ENCODE measurements at regions of chr6 and their contacts with region 1.

Region 1: GRCh38 chr6:16332175-16332542 is 93.8 kb downstream of the GMPR start:
- DNase-seq: peak; percentile 90
- H3K4me3 ChIP-seq: no peak overlapping the region
- H3K27ac ChIP-seq: peak overlapping the region in 2 of 4 donors; percentile 30 to 83
- H3K4me1 ChIP-seq: peaks cover 0 to 54% (median 47%) of the 10 kb centered on the region in 4 donors
- H3K27me3 ChIP-seq: no peaks in the 10 kb centered on the region
- CTCF ChIP-seq: peak; percentile 72 to 92 (median 84)
- EP300 ChIP-seq: no peak
- POLR2A ChIP-seq: no peak

Region 2: DNA sequence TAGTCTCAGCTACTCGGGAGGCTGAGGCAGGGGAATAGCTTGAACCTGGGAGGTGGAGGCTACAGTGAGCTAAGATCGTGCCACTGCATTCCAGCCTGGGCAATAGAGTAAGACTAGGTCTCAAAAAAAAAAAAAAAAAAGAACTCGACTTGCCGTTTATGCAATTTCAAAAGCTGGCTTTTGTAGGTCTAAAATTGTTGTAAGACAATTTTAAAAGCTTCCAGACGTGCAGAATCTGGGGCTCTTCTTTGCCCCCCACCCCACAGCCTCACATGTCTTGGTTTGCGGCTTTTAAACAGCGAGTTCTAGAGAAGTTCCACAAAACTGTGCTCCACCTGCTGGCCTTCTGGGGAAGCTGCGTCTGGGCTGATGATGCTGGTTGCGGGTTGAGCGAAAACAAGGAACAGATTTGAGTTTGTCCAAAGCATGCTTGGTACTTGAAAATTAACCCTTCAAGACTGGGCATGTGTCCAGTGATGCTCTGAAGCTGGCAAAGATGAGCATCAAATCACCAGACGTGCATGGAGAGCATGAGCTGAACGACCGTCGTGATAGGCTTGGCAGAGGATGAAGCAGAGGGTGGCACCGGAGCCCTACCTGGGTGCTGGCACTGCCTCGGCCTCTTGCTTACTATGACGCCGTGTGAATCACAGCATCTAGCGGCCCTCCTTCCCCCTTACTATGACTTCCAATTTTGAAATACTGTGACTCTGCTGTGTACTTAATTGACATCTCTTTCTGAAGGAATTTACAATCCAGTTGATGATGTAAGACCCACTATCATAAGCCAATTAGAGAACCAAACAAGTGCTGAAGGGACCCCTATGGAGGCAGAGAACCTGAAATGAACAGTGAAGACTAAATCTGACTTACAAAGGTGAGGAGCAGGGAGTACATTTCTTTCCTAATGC is 77.6 kb after region 1 on chr6:
- intact Hi-C with region 1: loop called (anchors 2 kb)
- DNase-seq: peak; percentile 74
- H3K4me3 ChIP-seq: no peak overlapping the region
- H3K27ac ChIP-seq: peak overlapping the region in 2 of 4 donors; percentile 1 to 5
- H3K4me1 ChIP-seq: peaks cover 0 to 53% (median 32%) of the 10 kb centered on the region in 4 donors
- H3K27me3 ChIP-seq: no peaks in the 10 kb centered on the region
- CTCF ChIP-seq: peak; percentile 52 to 88 (median 70)
- EP300 ChIP-seq: no peak
- POLR2A ChIP-seq: no peak

Region 3: DNA sequence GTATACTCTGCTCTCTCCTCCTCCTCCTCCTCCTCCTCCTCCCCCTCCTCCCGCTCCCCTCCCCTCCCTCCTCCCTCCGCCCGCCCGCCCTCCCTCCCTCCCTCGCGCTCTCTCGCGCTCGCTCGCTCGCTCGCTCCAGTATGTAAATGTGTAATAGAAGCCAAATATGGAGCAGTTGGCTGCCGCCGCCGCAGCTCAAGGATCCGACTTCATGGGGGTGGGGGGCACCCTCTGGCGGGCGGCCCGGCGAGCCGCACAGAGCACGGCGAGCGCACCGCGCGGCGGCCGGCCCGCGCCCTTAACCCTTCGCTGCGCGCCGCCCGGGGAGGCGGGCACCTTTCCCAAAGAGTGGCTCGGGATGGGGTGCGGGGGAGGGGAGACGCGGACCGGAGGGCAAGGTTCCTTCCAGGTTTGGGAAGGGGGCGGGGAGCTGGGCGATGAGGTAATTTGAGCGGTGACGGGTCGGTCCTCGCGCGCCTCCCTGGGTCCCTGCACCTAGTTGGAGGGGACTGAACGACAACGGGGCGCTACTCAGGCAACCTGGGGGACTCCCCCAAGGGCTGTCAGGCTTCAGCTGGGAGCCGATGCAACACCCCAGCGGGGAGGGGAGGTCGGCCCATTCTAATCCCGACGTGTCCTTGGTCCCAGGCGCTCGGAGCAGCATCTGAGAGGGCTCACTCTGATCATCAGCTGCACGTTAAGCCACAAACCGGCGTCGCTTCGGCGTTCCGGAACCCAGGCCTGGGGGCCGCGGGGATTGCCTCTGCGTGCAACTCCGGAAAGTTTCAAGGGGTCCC is 429.5 kb after region 1 on chr6:
- intact Hi-C with region 1: loop called (anchors 2 kb)
- DNase-seq: peak; percentile 95
- H3K4me3 ChIP-seq: peak overlapping the region; percentile 80 to 96 (median 84)
- H3K27ac ChIP-seq: peak overlapping the region; percentile 97 to 99 (median 98)
- H3K4me1 ChIP-seq: peaks cover 0 to 64% (median 51%) of the 10 kb centered on the region in 4 donors
- H3K27me3 ChIP-seq: no peaks in the 10 kb centered on the region
- CTCF ChIP-seq: peak in 1 of 4 experiments; percentile 23
- EP300 ChIP-seq: peak in 1 of 4 donors; percentile 6
- POLR2A ChIP-seq: peak; percentile 45 to 52

Region 4: DNA sequence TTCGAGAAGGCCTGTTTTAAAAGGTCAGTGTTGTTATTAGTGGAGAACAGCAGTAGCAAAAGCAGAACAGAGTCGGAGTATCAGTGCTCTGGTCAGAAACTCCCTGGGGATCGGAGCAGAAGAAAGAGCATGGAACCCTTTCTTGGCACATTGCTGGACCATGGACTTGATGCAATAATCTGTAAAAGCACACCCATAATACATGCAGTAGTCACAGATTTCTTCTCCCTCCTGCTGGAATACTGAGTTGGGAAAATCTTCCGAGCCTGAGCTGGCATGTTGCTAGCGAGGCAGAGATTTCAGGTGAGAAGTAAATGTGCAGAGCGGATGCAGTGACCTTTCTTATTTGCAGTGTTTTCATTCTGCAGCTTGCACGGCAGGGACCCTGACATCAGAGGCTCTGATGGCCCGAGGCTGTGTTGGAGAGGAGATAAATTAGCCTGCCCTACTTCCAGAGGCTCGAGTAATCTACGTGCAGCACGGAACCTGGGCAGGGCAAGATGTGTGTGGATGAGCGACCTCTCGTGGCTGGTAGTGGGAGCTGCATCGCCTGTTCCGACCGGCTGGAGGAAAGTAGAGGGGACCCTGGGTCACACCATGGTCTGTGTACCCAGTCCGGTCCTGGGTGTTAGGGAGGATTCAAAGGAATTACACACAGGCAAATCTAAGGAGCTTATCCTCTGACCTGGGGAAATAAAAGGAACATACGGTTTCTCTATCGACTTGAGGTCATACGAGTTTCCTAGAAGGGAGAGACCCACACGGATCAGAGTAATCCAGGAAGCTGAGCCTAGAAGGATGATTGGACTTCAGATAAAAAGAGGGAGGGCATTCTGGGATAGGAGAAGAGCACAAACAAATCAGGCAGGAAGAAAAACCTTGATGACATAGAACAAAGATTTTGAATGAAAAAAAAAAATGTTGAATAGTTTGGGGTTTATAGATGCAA is 632.7 kb after region 1 on chr6:
- intact Hi-C with region 1: loop called (anchors 1 kb)
- DNase-seq: peak; percentile 87
- H3K4me3 ChIP-seq: peak overlapping the region in 1 of 4 donors; percentile 14
- H3K27ac ChIP-seq: no peak overlapping the region
- H3K4me1 ChIP-seq: peaks cover 0 to 10% (median 4%) of the 10 kb centered on the region in 4 donors
- H3K27me3 ChIP-seq: no peaks in the 10 kb centered on the region
- CTCF ChIP-seq: peak; percentile 67 to 89 (median 82)
- EP300 ChIP-seq: no peak
- POLR2A ChIP-seq: peak in 1 of 2 donors; percentile 12

Region 5: DNA sequence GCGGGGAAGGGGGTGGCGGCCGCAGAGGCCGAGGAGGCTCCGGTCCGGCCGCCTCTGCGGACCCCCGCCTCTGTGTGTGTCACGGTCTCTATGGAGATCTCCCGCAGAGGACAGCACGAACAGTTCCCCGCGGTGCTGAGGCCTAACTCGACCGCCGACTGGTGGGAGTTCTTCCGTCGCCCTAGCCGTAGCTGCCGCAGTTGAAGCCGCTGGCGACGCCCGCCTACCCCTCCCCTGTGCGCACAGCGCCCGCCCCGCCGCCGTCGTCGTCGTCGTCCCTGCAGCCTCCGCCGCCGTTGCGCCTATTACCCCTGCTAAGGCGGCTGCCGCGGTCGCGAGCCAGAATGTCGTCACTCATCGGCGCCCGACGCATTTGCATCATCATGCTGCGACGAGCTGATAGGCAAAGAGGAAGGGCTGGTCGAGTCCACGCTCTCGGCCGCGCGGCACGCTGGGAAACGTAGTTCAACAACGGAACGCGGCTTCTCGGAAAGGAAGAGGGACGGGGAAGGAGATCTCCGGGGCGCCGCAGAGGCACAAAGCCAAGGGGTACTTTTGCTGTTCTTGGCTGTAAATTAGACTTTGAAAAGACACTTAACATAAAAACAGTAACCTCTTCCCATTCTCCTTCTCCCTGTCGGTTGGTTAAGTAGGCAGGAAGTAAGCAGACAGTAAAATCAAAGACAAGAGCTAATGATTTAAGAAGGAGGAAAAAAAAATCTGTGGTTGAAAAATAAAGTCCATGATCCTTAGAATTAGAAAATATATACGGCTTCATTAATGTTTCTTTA is 1374.6 kb after region 1 on chr6 and contains the start of gene NUP153:
- intact Hi-C with region 1: loop called (anchors 10 kb)
- DNase-seq: peak; percentile 99
- H3K4me3 ChIP-seq: peak within 1 kb of the TSS; percentile 89 to 98 (median 89)
- H3K27ac ChIP-seq: peak within 1 kb of the TSS; percentile 99 to 100 (median 99)
- H3K4me1 ChIP-seq: peaks cover 0 to 38% (median 33%) of the 10 kb centered on the region in 4 donors
- H3K27me3 ChIP-seq: no peaks in the 10 kb centered on the region
- CTCF ChIP-seq: no peak
- EP300 ChIP-seq: peak in 2 of 4 donors; percentile 72 to 90
- POLR2A ChIP-seq: peak; percentile 84 to 92
- total RNA-seq, gene NUP153: 30.0 to 31.4 (median 30.6) TPM

Measured in sigmoid colon (tissue), 7 donors.